ENCODE measurements at regions of chr4 and their contacts with region 1.

Region 1: DNA sequence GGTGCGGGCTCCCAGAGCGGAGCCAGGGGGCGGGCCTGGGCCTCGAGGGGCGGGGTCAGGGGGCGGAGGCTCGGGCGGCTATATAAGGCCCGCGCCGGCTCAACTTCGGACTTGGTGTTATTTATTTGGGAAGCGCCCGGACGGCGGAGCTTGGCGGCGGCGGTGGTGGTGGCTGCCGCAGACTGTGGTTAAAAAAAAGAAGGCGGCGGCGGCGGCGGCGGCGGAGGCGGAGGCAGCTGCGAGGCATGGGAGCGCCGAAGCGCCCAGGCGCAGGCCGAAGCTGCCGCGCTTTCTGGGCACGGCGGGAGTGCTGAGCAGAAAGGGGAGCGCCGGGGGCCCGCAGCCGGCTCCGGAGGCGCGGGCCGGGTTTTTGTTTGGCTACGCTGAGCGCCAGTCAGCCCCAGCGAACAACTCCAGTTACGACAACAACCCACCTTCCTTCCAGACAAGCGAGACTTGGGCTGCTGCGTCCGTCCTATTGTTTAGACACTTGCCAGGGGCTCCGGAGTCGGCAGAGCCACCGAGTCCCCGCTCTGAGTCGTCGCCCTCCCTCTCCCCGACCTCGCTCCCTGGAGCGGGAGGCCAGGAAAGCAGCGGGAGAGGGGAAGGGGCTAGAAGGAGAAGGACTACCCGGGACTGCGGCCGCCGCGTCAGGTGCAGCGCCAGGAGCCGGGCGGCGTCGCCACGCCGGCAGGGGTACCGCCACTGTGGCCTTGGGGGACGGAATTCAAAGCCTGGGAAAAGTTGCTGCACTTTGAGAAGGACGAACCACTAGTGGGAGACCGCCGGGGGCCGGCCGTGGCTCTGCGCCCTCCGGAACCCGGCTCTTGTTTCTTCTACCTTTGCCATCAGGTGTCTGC is at the start of gene SLIT2:
- DNase-seq: peak; percentile 95
- H3K4me3 ChIP-seq: peak within 1 kb of the TSS; percentile 54 to 74 (median 72)
- H3K27ac ChIP-seq: peak within 1 kb of the TSS; percentile 68 to 84 (median 79)
- H3K4me1 ChIP-seq: peaks cover 0 to 45% (median 26%) of the 10 kb centered on the region in 4 donors
- H3K27me3 ChIP-seq: peaks cover 0 to 40% (median 5%) of the 10 kb centered on the region in 3 donors
- CTCF ChIP-seq: no peak
- EP300 ChIP-seq: no peak
- POLR2A ChIP-seq: peak; percentile 60 to 67
- total RNA-seq, gene SLIT2: 27.0 to 49.0 (median 34.9) TPM

Region 2: DNA sequence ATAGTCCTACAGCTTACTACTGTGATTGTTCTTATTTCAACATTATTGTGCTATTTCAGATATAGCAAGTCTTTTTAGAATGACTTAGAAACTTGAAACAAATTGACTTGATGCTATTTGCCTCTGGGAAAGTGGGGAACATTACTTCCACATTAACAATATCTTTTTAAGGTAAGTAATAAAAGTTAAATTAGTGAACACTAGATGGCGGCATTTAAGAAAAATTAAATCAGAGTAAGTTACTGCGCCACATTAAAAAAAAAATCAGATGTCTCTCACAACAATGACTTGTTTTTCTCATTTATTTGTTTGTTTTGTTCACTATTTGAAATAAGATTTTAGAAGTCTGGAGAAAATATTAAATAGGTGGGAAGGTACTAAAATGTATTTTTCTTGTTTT is 1027.2 kb before region 1 on chr4:
- intact Hi-C with region 1: loop called (anchors 2 kb)
- DNase-seq: no peak
- H3K4me3 ChIP-seq: no peak overlapping the region
- H3K27ac ChIP-seq: no peak overlapping the region
- H3K4me1 ChIP-seq: no peaks in the 10 kb centered on the region
- H3K27me3 ChIP-seq: no peaks in the 10 kb centered on the region
- CTCF ChIP-seq: peak in 1 of 4 experiments; percentile 45
- EP300 ChIP-seq: no peak
- POLR2A ChIP-seq: no peak

Region 3: GRCh38 chr4:20428436-20429160 is 176.6 kb after region 1 on chr4:
- intact Hi-C with region 1: loop called (anchors 5 kb)
- DNase-seq: no peak
- H3K4me3 ChIP-seq: no peak overlapping the region
- H3K27ac ChIP-seq: no peak overlapping the region
- H3K4me1 ChIP-seq: peaks cover 0 to 42% (median 30%) of the 10 kb centered on the region in 4 donors
- H3K27me3 ChIP-seq: no peaks in the 10 kb centered on the region
- CTCF ChIP-seq: no peak
- EP300 ChIP-seq: no peak
- POLR2A ChIP-seq: no peak